ENCODE measurements at regions of chr16 and their contacts with region 1.

Region 1: GRCh38 chr16:50024684-50025536 is at the start of gene CNEP1R1:
- DNase-seq: peak; percentile 88 to 95
- H3K4me3 ChIP-seq: peak within 1 kb of the TSS; percentile 78
- H3K27ac ChIP-seq: no peak within 1 kb of the TSS
- H3K4me1 ChIP-seq: peaks cover 12% of the 10 kb centered on the region
- H3K27me3 ChIP-seq: peaks cover 12% of the 10 kb centered on the region; the same call in 1 of the 2 replicates
- CTCF ChIP-seq: peak; percentile 99
- total RNA-seq, gene CNEP1R1: 10.4 and 12.2 TPM in 2 replicates

Region 2: GRCh38 chr16:50040033-50040432 is 15.1 kb after region 1 on chr16:
- CTCF ChIA-PET with region 1: no interaction called
- POLR2A ChIA-PET with region 1: no interaction called
- intact Hi-C with region 1: no loop called
- DNase-seq: peak; percentile 7 to 41
- H3K4me3 ChIP-seq: no peak overlapping the region
- H3K27ac ChIP-seq: no peak overlapping the region
- H3K4me1 ChIP-seq: no peaks in the 10 kb centered on the region
- H3K27me3 ChIP-seq: no peaks in the 10 kb centered on the region
- CTCF ChIP-seq: no peak

Region 3: DNA sequence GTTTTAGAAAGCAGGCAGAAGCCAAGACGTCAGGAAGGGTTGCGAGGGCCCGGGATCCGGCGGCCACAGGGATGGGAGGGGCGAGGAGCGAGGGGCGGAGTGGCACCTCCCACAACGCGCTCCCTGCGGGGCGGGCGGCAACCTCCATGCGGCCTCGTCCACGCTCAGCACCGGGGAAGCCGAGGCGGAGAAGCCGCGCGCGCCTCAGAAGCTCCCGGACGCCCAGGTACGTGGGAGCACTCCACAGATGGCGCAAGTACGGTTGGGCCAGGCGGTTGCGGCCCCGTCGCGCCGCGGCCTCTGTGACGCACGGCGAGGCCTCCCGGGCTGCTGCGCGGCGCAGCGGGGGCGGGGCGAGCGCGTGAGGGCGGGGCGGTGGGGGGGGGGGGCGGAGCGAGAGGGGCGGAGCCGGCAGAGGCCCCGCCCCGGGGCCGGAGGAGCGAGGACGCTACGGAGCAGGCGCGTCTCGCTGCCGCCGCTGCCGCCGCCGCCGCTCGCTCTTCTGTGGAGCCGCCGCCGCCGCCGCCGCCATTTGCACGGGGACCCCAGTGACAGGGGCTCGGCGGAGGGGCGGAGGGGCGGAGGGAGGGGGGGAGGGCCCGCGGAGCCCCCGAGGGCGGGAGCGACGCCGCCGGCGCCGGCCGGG is 128.0 kb after region 1 on chr16 and contains the start of gene TENT4B:
- CTCF ChIA-PET with region 1: no interaction called
- POLR2A ChIA-PET with region 1: no interaction called
- intact Hi-C with region 1: loop called (anchors 1 kb)
- DNase-seq: peak; percentile 56 to 88
- H3K4me3 ChIP-seq: peak within 1 kb of the TSS; percentile 99
- H3K27ac ChIP-seq: peak within 1 kb of the TSS; percentile 66
- H3K4me1 ChIP-seq: peaks cover 20% of the 10 kb centered on the region
- H3K27me3 ChIP-seq: no peaks in the 10 kb centered on the region
- CTCF ChIP-seq: no peak
- total RNA-seq, gene TENT4B: 6.1 and 11.4 TPM in 2 replicates

Region 4: DNA sequence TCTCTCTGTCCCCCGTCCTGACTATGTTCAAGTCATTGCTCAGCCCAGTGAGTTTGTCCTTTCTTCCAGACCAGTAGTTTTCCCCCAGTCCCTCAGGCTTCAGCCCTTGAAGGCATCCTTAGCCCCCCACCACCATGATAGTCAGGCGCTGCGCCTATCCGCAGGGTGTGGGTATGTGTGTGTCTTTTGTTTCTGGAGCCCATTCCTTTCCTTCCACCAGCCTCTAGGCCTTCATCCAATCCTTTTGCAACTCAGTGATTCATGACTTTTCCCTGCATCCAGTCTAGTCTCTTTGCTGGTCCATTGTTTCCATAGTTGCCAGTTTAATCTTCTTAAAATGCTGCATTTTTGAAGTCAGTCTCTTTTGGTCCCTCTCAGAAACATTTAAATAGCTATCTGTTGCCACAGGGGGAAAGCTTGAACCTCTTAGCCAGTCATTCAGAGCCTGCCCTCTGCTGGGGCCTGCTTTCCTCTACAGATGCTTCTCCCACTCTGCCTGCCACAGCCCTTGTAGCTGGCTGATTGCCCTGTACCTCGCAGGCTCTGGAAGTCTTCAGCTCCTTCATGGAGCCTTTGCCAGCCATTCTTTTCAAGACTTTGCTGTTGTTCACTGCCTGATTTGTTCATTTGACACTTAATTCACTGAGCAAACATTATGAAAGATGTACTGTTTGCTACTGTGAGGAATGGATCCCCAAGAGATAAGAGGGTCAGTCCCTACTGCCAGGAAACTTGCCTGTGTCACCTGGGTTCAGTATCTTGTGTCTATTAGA is 185.5 kb after region 1 on chr16:
- CTCF ChIA-PET with region 1: interaction called, 36 read pairs
- POLR2A ChIA-PET with region 1: interaction called, 3 read pairs
- intact Hi-C with region 1: loop called (anchors 1 kb)
- DNase-seq: peak; percentile 53 to 55
- H3K4me3 ChIP-seq: no peak overlapping the region
- H3K27ac ChIP-seq: no peak overlapping the region
- H3K4me1 ChIP-seq: no peaks in the 10 kb centered on the region
- H3K27me3 ChIP-seq: no peaks in the 10 kb centered on the region
- CTCF ChIP-seq: peak; percentile 68

Region 5: GRCh38 chr16:50354629-50355456 is 329.9 kb after region 1 on chr16:
- CTCF ChIA-PET with region 1: interaction called, 10 read pairs
- POLR2A ChIA-PET with region 1: interaction called, 5 read pairs
- intact Hi-C with region 1: loop called (anchors 10 kb)
- DNase-seq: no peak
- H3K4me3 ChIP-seq: no peak overlapping the region
- H3K27ac ChIP-seq: no peak overlapping the region
- H3K4me1 ChIP-seq: no peaks in the 10 kb centered on the region
- H3K27me3 ChIP-seq: no peaks in the 10 kb centered on the region
- CTCF ChIP-seq: peak; percentile 83

Region 6: DNA sequence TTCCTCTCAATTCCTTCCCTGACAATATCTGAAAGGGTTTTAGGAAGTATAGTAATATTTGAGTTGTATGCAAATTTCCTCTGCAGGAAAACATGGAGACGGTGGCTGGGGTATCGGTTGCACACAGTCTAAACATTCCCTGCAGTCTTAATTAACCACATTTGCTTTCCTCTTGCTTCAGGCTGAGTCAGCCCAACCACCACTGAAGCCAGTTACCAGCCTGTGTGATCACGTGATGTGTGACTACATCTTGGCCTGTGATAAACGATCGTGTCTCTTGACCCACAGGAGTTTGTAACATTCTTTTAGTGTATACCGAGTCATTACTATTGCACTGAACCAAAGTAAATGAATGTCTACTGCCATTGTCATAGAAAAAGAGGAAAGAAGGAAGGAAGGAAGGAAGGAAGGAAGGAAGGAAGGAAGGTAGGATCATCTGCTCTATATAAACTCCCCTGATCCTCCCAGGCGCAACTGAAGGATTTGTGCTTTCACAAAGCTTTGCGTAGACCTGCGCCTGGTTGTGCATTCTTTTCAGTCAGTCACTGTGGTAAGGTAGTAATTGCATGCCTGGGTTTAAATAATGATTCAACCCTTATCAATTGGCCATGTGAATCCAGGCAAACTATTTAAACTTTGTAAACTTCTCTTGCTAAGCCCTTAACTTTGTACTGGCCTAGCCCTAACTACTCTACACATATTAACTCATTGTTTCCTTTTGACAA is 1406.8 kb after region 1 on chr16:
- CTCF ChIA-PET with region 1: no interaction called
- POLR2A ChIA-PET with region 1: no interaction called
- intact Hi-C with region 1: no loop called
- DNase-seq: no peak
- H3K4me3 ChIP-seq: no peak overlapping the region
- H3K27ac ChIP-seq: no peak overlapping the region
- H3K4me1 ChIP-seq: no peaks in the 10 kb centered on the region
- H3K27me3 ChIP-seq: no peaks in the 10 kb centered on the region
- CTCF ChIP-seq: no peak